Endothelial cell of umbilical vein (primary cell): ENCODE measurements at regions of chr15 and their contacts with region 1.

Region 1: GRCh38 chr15:34367101-34368081 is at the start of gene LPCAT4:
- DNase-seq: peak; percentile 88
- H3K4me3 ChIP-seq: peak within 1 kb of the TSS; percentile 79 to 94 (median 83)
- H3K27ac ChIP-seq: peak within 1 kb of the TSS; percentile 87
- H3K4me1 ChIP-seq: peaks cover 20% of the 10 kb centered on the region
- H3K27me3 ChIP-seq: no peaks in the 10 kb centered on the region
- CTCF ChIP-seq: peak; percentile 94 to 98
- POLR2A ChIP-seq: peak; percentile 93
- total RNA-seq, gene LPCAT4: 44.0 and 49.3 TPM in 2 replicates

Region 2: GRCh38 chr15:34055853-34056595 is 311.4 kb before region 1 on chr15:
- CTCF ChIA-PET with region 1: interaction called, 29 read pairs
- POLR2A ChIA-PET with region 1: no interaction called
- dilution Hi-C with region 1: no loop called
- intact Hi-C with region 1: no loop called
- DNase-seq: peak; percentile 73
- H3K4me3 ChIP-seq: no peak overlapping the region
- H3K27ac ChIP-seq: peak overlapping the region; percentile 59
- H3K4me1 ChIP-seq: peaks cover 9% of the 10 kb centered on the region
- H3K27me3 ChIP-seq: peaks cover 0 to 1% of the 10 kb centered on the region in 2 experiments
- CTCF ChIP-seq: no peak
- POLR2A ChIP-seq: no peak

Region 3: GRCh38 chr15:34109797-34110663 is 257.4 kb before region 1 on chr15:
- CTCF ChIA-PET with region 1: interaction called, 94 read pairs
- POLR2A ChIA-PET with region 1: interaction called, 5 read pairs
- dilution Hi-C with region 1: no loop called
- intact Hi-C with region 1: loop called (anchors 1 kb)
- DNase-seq: peak; percentile 56
- H3K4me3 ChIP-seq: no peak overlapping the region
- H3K27ac ChIP-seq: no peak overlapping the region
- H3K4me1 ChIP-seq: no peaks in the 10 kb centered on the region
- H3K27me3 ChIP-seq: no peaks in the 10 kb centered on the region
- CTCF ChIP-seq: peak; percentile 38 to 57
- POLR2A ChIP-seq: no peak

Region 4: GRCh38 chr15:34223904-34224596 is 143.3 kb before region 1 on chr15:
- CTCF ChIA-PET with region 1: interaction called, 12 read pairs
- POLR2A ChIA-PET with region 1: no interaction called
- dilution Hi-C with region 1: no loop called
- intact Hi-C with region 1: loop called (anchors 1 kb)
- DNase-seq: peak; percentile 44
- H3K4me3 ChIP-seq: peak overlapping the region; percentile 31 to 94 (median 67)
- H3K27ac ChIP-seq: peak overlapping the region; percentile 40
- H3K4me1 ChIP-seq: peaks cover 9% of the 10 kb centered on the region
- H3K27me3 ChIP-seq: no peaks in the 10 kb centered on the region
- CTCF ChIP-seq: no peak
- POLR2A ChIP-seq: no peak

Region 5: GRCh38 chr15:34337557-34338306 is 29.7 kb before region 1 on chr15 and contains the start of gene SLC12A6:
- CTCF ChIA-PET with region 1: interaction called, 39 read pairs
- POLR2A ChIA-PET with region 1: interaction called, 3 read pairs
- dilution Hi-C with region 1: no loop called
- intact Hi-C with region 1: no loop called
- DNase-seq: peak; percentile 92
- H3K4me3 ChIP-seq: peak within 1 kb of the TSS; percentile 54 to 83 (median 61)
- H3K27ac ChIP-seq: peak within 1 kb of the TSS; percentile 71
- H3K4me1 ChIP-seq: peaks cover 43% of the 10 kb centered on the region
- H3K27me3 ChIP-seq: no peaks in the 10 kb centered on the region
- CTCF ChIP-seq: no peak
- POLR2A ChIP-seq: peak; percentile 56
- total RNA-seq, gene SLC12A6: 27.1 and 29.4 TPM in 2 replicates

Region 6: DNA sequence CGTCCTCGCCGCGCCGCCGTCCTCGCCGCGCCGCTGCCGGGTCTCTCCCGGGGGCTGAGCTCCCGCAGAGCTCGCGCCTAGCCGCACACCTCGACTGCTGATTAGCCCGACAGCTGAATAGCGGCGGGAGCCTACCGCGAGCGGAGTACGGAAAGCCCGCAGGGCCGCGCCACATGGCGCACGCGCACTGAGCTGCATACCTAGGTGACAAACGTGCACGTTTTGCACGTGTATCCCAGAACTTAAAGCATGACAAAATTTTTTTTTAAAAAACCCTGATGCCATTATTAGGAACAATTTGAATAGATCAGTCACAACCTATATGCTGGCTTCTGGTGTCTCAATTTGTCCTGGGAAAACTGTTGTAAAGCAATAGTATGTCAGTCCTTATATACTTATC is 70.3 kb after region 1 on chr15 and contains the start of gene GOLGA8A:
- CTCF ChIA-PET with region 1: interaction called, 4 read pairs
- POLR2A ChIA-PET with region 1: no interaction called
- dilution Hi-C with region 1: no loop called
- intact Hi-C with region 1: loop called (anchors 2 kb)
- DNase-seq: peak; percentile 81
- H3K4me3 ChIP-seq: peak within 1 kb of the TSS; percentile 68 to 78 (median 77)
- H3K27ac ChIP-seq: peak within 1 kb of the TSS; percentile 23
- H3K4me1 ChIP-seq: peaks cover 7% of the 10 kb centered on the region
- H3K27me3 ChIP-seq: peaks cover 2 to 8% of the 10 kb centered on the region in 2 experiments
- CTCF ChIP-seq: no peak
- POLR2A ChIP-seq: no peak
- total RNA-seq, gene GOLGA8A: 53.5 and 61.1 TPM in 2 replicates